ENCODE measurements at regions of chr19 and their contacts with region 1.

Region 1: GRCh38 chr19:9621156-9622037 is at the start of gene ZNF561:
- DNase-seq: peak; percentile 90
- H3K4me3 ChIP-seq: peak within 1 kb of the TSS; percentile 27 to 76 (median 57)
- H3K27ac ChIP-seq: peak within 1 kb of the TSS; percentile 93
- H3K4me1 ChIP-seq: peaks cover 10% of the 10 kb centered on the region
- H3K27me3 ChIP-seq: no peaks in the 10 kb centered on the region
- CTCF ChIP-seq: no peak
- POLR2A ChIP-seq: peak; percentile 83
- total RNA-seq, gene ZNF561: 39.4 and 44.9 TPM in 2 replicates

Region 2: GRCh38 chr19:9128171-9128570 is 493.2 kb before region 1 on chr19:
- CTCF ChIA-PET with region 1: no interaction called
- POLR2A ChIA-PET with region 1: no interaction called
- dilution Hi-C with region 1: no loop called
- intact Hi-C with region 1: loop called (anchors 2 kb)
- DNase-seq: peak; percentile 96
- H3K4me3 ChIP-seq: no peak overlapping the region
- H3K27ac ChIP-seq: peak overlapping the region; percentile 76
- H3K4me1 ChIP-seq: peaks cover 5% of the 10 kb centered on the region
- H3K27me3 ChIP-seq: no peaks in the 10 kb centered on the region
- CTCF ChIP-seq: no peak
- POLR2A ChIP-seq: peak; percentile 29

Region 3: GRCh38 chr19:9309139-9309973 is 312.0 kb before region 1 on chr19 and contains the start of gene ZNF699:
- CTCF ChIA-PET with region 1: no interaction called
- POLR2A ChIA-PET with region 1: no interaction called
- dilution Hi-C with region 1: no loop called
- intact Hi-C with region 1: loop called (anchors 5 kb)
- DNase-seq: peak; percentile 98
- H3K4me3 ChIP-seq: peak within 1 kb of the TSS; percentile 52 to 88 (median 67)
- H3K27ac ChIP-seq: peak within 1 kb of the TSS; percentile 55
- H3K4me1 ChIP-seq: peaks cover 7% of the 10 kb centered on the region
- H3K27me3 ChIP-seq: no peaks in the 10 kb centered on the region
- CTCF ChIP-seq: no peak
- POLR2A ChIP-seq: no peak
- total RNA-seq, gene ZNF699: 3.9 and 4.7 TPM in 2 replicates

Region 4: DNA sequence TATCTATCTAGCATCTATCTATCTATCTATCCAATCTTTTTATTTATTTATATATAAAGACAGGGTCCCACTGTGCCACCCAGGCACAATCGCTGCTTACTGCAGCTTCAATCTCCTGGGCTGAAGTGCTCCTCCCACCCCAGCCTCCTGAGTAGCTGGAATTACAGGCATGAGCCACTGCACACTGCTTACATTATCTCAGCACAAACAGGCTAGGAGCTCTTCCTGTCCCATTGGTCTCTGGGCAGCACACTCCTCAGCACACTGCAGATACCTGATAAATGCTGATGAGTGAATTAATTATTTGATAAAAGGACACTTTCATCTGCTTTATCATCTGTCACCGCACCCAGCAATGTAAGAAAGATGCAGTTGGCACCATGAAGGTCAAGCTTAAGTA is 37.4 kb after region 1 on chr19:
- CTCF ChIA-PET with region 1: no interaction called
- POLR2A ChIA-PET with region 1: no interaction called
- dilution Hi-C with region 1: no loop called
- intact Hi-C with region 1: no loop called
- DNase-seq: no peak
- H3K4me3 ChIP-seq: no peak overlapping the region
- H3K27ac ChIP-seq: no peak overlapping the region
- H3K4me1 ChIP-seq: no peaks in the 10 kb centered on the region
- H3K27me3 ChIP-seq: no peaks in the 10 kb centered on the region
- CTCF ChIP-seq: no peak
- POLR2A ChIP-seq: no peak

Region 5: DNA sequence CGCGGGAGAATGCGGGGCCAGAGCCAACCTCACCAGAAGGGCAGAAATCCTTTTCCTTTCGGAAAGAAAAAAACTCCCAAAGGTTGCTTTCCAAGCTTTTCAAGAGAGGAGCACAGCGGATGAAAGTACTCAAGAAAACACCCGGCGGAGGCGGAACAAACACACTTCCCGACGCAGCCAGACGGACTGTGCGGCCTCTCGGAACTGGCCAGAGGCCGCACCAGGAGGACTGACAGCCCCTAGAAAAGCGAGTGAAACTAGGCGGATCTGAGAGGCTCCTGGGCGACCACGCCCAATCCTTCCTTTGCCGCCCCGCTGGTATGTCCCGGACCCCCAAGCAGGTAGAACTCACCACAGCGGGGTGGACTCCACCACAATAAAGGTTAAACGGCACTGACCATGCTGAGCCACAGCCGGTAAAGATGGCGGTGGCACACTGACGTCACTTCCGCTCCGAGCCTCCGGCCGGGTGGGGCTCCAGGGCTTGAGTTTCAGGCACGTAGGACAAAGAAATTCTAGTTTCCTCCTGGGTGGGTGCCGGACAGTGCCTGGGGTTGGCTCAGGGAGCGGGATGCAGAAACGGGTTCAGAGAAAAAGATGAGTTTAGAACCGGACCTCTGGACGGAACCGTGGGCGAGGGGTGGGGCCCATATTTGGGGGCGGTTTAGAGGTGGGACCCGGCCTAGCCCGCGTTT is 53.4 kb after region 1 on chr19 and contains the start of gene ZNF562:
- CTCF ChIA-PET with region 1: no interaction called
- POLR2A ChIA-PET with region 1: no interaction called
- dilution Hi-C with region 1: no loop called
- intact Hi-C with region 1: loop called (anchors 1 kb)
- DNase-seq: peak; percentile 89
- H3K4me3 ChIP-seq: peak within 1 kb of the TSS; percentile 73 to 88 (median 74)
- H3K27ac ChIP-seq: peak within 1 kb of the TSS; percentile 85
- H3K4me1 ChIP-seq: no peaks in the 10 kb centered on the region
- H3K27me3 ChIP-seq: no peaks in the 10 kb centered on the region
- CTCF ChIP-seq: no peak
- POLR2A ChIP-seq: peak; percentile 89
- total RNA-seq, gene ZNF562: 22.3 and 27.0 TPM in 2 replicates

Region 6: GRCh38 chr19:9709305-9709704 is 87.9 kb after region 1 on chr19:
- CTCF ChIA-PET with region 1: no interaction called
- POLR2A ChIA-PET with region 1: no interaction called
- dilution Hi-C with region 1: no loop called
- intact Hi-C with region 1: no loop called
- DNase-seq: no peak
- H3K4me3 ChIP-seq: no peak overlapping the region
- H3K27ac ChIP-seq: no peak overlapping the region
- H3K4me1 ChIP-seq: no peaks in the 10 kb centered on the region
- H3K27me3 ChIP-seq: no peaks in the 10 kb centered on the region
- CTCF ChIP-seq: no peak
- POLR2A ChIP-seq: no peak

Region 7: DNA sequence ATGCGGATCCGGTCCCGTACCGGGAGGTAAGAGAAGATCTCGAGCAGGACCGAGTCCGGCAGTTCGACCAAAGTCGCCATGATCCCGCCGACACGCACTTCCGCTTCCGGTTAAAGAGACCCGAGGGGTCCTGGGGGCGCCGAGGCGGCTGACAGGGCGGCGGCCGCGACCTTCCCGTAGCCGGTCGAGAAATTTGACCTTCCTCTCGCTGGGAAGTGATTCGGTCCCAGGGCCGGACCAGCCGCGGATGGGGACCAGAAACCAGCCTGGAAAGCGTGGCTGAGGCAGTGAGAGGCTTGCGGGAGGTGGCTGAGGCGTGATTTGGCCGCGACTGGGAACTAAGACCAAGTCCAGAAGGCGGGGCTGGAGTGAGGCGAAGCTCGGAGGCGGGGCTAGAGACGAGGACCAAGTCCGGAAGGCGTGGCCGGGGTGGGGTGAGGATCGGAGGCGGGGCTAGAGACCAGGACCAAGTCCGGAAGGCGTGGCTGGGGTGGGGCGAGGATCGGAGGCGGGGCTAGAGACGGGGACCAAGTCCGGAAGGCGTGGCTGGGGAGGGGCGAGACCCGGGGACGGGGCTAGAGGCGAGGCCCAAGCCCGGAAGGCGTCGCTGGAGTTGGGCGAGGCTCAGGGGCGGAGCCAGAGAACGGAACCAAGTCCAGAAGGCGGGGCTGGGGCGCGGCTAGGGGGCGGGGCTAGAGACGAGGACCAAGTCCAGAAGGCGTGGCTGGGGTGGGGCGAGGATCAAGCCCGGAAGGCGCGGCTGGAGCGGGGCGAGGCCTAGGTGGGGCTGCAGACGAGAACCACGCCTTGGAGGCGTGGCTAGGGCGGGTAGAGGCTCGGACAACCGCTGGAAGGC is 197.6 kb after region 1 on chr19 and contains the start of gene FBXL12:
- CTCF ChIA-PET with region 1: no interaction called
- POLR2A ChIA-PET with region 1: no interaction called
- dilution Hi-C with region 1: no loop called
- intact Hi-C with region 1: loop called (anchors 1 kb)
- DNase-seq: peak; percentile 99
- H3K4me3 ChIP-seq: peak within 1 kb of the TSS; percentile 42 to 82 (median 74)
- H3K27ac ChIP-seq: peak within 1 kb of the TSS; percentile 56
- H3K4me1 ChIP-seq: peaks cover 12% of the 10 kb centered on the region
- H3K27me3 ChIP-seq: no peaks in the 10 kb centered on the region
- CTCF ChIP-seq: no peak
- POLR2A ChIP-seq: peak; percentile 86
- total RNA-seq, gene FBXL12: 25.8 and 26.9 TPM in 2 replicates

Measured in endothelial cell of umbilical vein (primary cell).